HEK293 (cell line): ENCODE measurements at regions of chr10 and their contacts with region 1.

Region 1: GRCh38 chr10:95693668-95694534 is at the start of gene TCTN3:
- H3K4me3 ChIP-seq: peak within 1 kb of the TSS; percentile 73
- H3K27ac ChIP-seq: peak within 1 kb of the TSS; percentile 50; the same call in 1 of the 2 replicates
- H3K4me1 ChIP-seq: peaks cover 5% of the 10 kb centered on the region; the same call in 1 of the 2 replicates
- CTCF ChIP-seq: peak; percentile 99

Region 2: GRCh38 chr10:94545391-94546048 is 1148.4 kb before region 1 on chr10 and contains the start of gene HELLS:
- CTCF ChIA-PET with region 1: no interaction called
- POLR2A ChIA-PET with region 1: no interaction called
- H3K4me3 ChIP-seq: peak within 1 kb of the TSS; percentile 99
- H3K27ac ChIP-seq: peak within 1 kb of the TSS; percentile 95
- H3K4me1 ChIP-seq: peaks cover 18% of the 10 kb centered on the region
- CTCF ChIP-seq: peak; percentile 53; the same call in 1 of the 2 replicates

Region 3: GRCh38 chr10:95613330-95613729 is 80.6 kb before region 1 on chr10:
- CTCF ChIA-PET with region 1: no interaction called
- POLR2A ChIA-PET with region 1: no interaction called
- H3K4me3 ChIP-seq: no peak overlapping the region
- H3K27ac ChIP-seq: no peak overlapping the region
- H3K4me1 ChIP-seq: no peaks in the 10 kb centered on the region
- CTCF ChIP-seq: no peak

Region 4: GRCh38 chr10:95664543-95664942 is 29.4 kb before region 1 on chr10:
- CTCF ChIA-PET with region 1: interaction called, 15 read pairs
- POLR2A ChIA-PET with region 1: no interaction called
- H3K4me3 ChIP-seq: no peak overlapping the region
- H3K27ac ChIP-seq: no peak overlapping the region
- H3K4me1 ChIP-seq: no peaks in the 10 kb centered on the region
- CTCF ChIP-seq: no peak

Region 5: GRCh38 chr10:95675403-95676112 is 18.3 kb before region 1 on chr10:
- CTCF ChIA-PET with region 1: interaction called, 18 read pairs
- POLR2A ChIA-PET with region 1: interaction called, 3 read pairs
- H3K4me3 ChIP-seq: no peak overlapping the region
- H3K27ac ChIP-seq: no peak overlapping the region
- H3K4me1 ChIP-seq: no peaks in the 10 kb centered on the region
- CTCF ChIP-seq: no peak

Region 6: DNA sequence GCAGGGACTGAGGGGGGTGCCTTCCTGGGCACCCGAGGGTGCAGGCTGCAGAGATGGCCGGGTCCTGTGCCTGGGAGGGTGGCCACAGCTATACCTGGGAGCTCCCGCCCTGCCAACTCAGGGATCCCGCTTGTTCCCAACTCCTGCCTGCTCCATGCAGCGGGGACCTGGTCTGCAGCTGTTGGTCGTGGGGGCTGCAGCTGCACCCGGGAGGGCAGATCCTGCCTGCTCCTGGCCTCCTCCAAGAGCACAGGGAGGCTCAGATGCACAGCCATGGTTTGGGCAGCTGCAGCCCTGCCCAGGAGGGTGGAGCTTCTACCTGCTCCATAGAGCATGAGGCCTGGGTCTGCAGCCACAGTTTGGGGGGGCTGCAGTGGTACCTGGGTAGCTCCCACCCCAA is 13.1 kb after region 1 on chr10:
- CTCF ChIA-PET with region 1: interaction called, 17 read pairs
- POLR2A ChIA-PET with region 1: interaction called, 4 read pairs
- H3K4me3 ChIP-seq: no peak overlapping the region
- H3K27ac ChIP-seq: no peak overlapping the region
- H3K4me1 ChIP-seq: no peaks in the 10 kb centered on the region
- CTCF ChIP-seq: no peak

Region 7: DNA sequence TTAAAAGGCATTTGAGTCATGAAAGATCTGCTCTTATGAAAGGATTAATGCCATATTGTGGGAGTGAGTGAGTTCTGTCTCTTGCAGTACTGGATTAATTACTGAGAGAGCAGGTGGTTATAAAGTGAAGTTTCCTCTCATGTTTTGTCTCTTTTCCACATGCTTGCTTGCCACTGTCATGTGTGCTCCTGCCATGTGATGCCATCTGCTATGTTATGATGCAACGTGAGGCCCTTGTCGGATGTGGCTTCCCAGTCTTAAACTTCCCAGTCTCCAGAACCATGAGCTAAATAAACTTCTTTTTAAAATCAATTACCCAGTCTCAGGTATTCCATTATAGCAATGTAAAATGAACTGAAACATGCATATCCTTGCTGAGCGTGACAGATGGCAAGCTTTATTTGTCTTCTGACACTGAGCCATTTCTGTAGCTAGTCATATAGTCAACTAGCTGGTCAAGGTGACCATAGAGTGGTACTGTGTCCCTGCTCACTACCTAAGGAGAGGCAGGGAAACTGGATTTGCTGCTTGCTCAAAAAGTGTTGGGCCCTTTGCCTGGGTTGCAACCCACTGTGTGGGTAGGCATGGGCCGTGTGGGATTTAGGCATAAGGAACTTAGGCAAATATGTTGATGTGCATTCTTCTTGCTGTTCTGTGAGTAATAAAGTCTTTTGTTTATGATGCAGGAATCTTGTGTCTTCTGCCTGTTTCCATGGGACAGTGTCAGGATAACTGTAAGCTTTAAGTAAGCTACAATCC is 22.7 kb after region 1 on chr10:
- CTCF ChIA-PET with region 1: interaction called, 14 read pairs
- POLR2A ChIA-PET with region 1: no interaction called
- H3K4me3 ChIP-seq: no peak overlapping the region
- H3K27ac ChIP-seq: no peak overlapping the region
- H3K4me1 ChIP-seq: no peaks in the 10 kb centered on the region
- CTCF ChIP-seq: no peak

Region 8: GRCh38 chr10:95841661-95842498 is 148.0 kb after region 1 on chr10:
- CTCF ChIA-PET with region 1: interaction called, 220 read pairs
- POLR2A ChIA-PET with region 1: interaction called, 7 read pairs
- H3K4me3 ChIP-seq: no peak overlapping the region
- H3K27ac ChIP-seq: no peak overlapping the region
- H3K4me1 ChIP-seq: no peaks in the 10 kb centered on the region
- CTCF ChIP-seq: no peak

Region 9: GRCh38 chr10:95907456-95908253 is 213.8 kb after region 1 on chr10 and contains the start of gene CC2D2B:
- CTCF ChIA-PET with region 1: interaction called, 21 read pairs
- POLR2A ChIA-PET with region 1: no interaction called
- H3K4me3 ChIP-seq: peak within 1 kb of the TSS; percentile 76
- H3K27ac ChIP-seq: peak within 1 kb of the TSS; percentile 69; the same call in 1 of the 2 replicates
- H3K4me1 ChIP-seq: no peaks in the 10 kb centered on the region
- CTCF ChIP-seq: peak; percentile 29; the same call in 1 of the 2 replicates